MCF 10A (cell line): ENCODE measurements at regions of chr10 and their contacts with region 1.

Region 1: DNA sequence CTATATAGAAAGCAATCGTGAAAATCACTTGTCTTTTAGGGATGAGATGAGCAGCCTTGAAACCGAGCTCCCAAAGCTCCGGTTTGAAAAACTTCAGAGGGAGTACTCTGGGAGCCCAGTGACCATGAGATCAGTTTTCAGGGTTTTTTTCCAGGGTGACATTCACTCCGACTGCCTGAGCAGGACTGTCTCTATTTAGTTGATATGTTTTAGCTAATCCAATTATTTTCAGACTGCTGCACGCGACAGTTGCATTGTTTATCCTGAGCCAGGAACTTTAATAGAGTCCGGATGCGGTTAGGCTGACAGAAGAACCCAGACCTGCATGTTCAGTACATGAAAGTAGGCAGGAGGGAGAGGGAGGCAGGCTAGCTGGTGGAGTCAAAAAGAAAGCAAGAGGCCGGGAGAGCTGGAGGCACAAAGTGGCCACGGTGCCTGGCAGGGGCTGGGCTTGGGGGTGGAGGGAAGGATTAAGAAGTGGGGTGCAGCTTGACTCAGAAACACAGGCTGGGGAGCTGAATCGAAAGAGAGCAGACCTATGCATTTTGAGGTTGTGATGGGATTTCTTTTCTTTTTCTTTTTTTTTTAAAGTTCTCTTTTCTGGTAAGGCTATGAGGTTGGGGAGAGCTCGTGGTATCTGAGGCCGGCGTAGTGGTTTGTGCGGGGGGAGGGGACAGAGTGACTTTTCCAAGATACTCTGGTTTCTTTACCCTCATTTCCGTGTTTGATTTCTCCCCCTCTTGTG is 5.6 kb downstream of the GATA3 start:
- DNase-seq: peak; percentile 25
- H3K4me3 Mint-ChIP-seq: peak overlapping the region; percentile 93
- H3K27ac Mint-ChIP-seq: peak overlapping the region; percentile 93
- H3K4me1 Mint-ChIP-seq: peaks cover 32% of the 10 kb centered on the region
- H3K27me3 Mint-ChIP-seq: no peaks in the 10 kb centered on the region
- CTCF ChIP-seq: no peak

Region 2: GRCh38 chr10:7998831-7999230 is 61.3 kb before region 1 on chr10:
- CTCF ChIA-PET with region 1: no interaction called
- POLR2A ChIA-PET with region 1: no interaction called
- intact Hi-C with region 1: no loop called
- DNase-seq: no peak
- H3K4me3 Mint-ChIP-seq: no peak overlapping the region
- H3K27ac Mint-ChIP-seq: no peak overlapping the region
- H3K4me1 Mint-ChIP-seq: no peaks in the 10 kb centered on the region
- H3K27me3 Mint-ChIP-seq: no peaks in the 10 kb centered on the region
- CTCF ChIP-seq: no peak

Region 3: DNA sequence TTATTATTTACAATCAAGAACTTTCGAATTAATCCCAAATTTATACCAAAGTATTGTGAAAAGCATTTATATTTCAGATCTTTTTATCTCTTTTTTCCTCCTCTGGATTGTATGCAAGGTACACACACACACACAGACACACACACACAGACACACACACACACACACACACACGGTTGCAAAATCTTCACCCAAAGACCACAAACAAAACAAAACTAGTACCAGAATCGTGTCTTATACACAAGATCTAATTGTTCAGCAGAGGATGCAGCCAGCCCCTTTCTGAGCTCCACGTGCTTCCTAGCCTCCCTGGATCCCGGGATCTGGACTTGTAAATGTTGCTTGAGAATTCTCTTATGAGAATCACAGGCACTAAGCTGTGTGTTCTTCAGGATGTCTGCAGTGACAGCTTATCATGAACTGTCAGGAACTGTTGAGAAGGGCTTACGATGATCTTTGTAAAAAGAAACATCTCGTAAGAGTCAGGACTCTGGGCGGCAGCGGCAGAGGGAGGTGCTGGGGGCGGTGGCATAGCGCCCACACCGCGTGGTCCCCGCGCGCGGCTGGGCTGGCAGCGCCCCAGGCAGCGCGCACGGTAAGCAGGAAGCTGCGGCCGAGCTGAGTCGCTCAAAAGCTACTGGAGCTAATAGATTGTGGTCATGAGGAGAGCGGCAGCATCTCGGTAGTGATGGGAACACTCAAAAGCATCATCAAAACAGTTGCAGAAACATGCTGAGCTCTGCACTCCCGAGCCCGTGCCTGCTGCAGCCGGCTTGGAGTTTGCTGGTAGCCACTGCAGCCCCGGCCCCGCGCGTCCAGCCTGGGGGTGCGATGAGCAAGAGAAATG is 272.0 kb after region 1 on chr10:
- CTCF ChIA-PET with region 1: no interaction called
- POLR2A ChIA-PET with region 1: interaction called, 3 read pairs
- intact Hi-C with region 1: loop called (anchors 5 kb)
- DNase-seq: peak; percentile 48
- H3K4me3 Mint-ChIP-seq: peak overlapping the region; percentile 66
- H3K27ac Mint-ChIP-seq: no peak overlapping the region
- H3K4me1 Mint-ChIP-seq: peaks cover 7% of the 10 kb centered on the region
- H3K27me3 Mint-ChIP-seq: no peaks in the 10 kb centered on the region
- CTCF ChIP-seq: no peak

Region 4: DNA sequence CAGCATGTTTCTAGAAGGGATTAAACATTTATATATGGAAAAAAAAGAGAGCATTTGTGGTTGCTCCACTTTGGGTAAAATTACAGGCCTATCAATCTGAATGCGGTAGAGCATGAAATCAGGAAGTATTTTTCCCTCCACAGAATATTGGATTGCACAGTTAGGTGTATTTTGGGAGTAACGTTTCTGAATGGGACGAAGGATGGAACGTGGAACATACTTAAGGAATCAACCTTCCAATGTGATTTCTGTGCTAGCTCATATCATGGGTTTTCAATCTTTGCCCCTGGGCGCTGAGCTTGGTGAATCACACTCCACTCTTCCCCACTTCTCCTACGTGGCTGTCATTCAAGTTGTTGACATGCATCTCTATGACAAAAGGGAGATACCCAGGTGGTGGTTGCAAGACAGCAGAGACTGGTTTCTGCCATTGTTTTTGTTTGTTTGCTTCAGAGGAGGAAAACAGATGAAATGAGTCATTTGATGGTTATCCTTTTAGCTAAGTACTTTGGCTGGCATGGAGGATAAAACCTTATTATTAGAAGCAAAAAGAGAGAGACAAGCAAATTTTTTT is 568.1 kb after region 1 on chr10:
- CTCF ChIA-PET with region 1: no interaction called
- POLR2A ChIA-PET with region 1: no interaction called
- intact Hi-C with region 1: no loop called
- DNase-seq: peak; percentile 41
- H3K4me3 Mint-ChIP-seq: no peak overlapping the region
- H3K27ac Mint-ChIP-seq: no peak overlapping the region
- H3K4me1 Mint-ChIP-seq: peaks cover 5% of the 10 kb centered on the region
- H3K27me3 Mint-ChIP-seq: no peaks in the 10 kb centered on the region
- CTCF ChIP-seq: no peak